ENCODE measurements at regions of chr14 and their contacts with region 1.

Region 1: GRCh38 chr14:101809671-101810514 is 48.4 kb downstream of the PPP2R5C start:
- DNase-seq: peak; percentile 84
- H3K4me3 Mint-ChIP-seq: peak overlapping the region; percentile 94
- H3K27ac Mint-ChIP-seq: peak overlapping the region; percentile 99
- H3K4me1 Mint-ChIP-seq: peaks cover 49% of the 10 kb centered on the region
- H3K27me3 Mint-ChIP-seq: no peaks in the 10 kb centered on the region

Region 2: GRCh38 chr14:101791919-101792572 is 17.8 kb before region 1 on chr14:
- intact Hi-C with region 1: loop called (anchors 2 kb)
- DNase-seq: no peak
- H3K4me3 Mint-ChIP-seq: peak overlapping the region; percentile 1
- H3K27ac Mint-ChIP-seq: peak overlapping the region; percentile 28
- H3K4me1 Mint-ChIP-seq: peaks cover 19% of the 10 kb centered on the region
- H3K27me3 Mint-ChIP-seq: no peaks in the 10 kb centered on the region

Measured in activated T-helper 2 cell treated with anti-CD3 and anti-CD28 coated beads, Interferon-gamma antibody, Interleukin-2, Interleukin-4, amounts not matched to agents 10 μg/mL and 5 μg/mL and 100 μg/mL, durations not matched to agents 14 hours and 24 hours and 36 hours (primary cell).